PC-9 (cell line): ENCODE measurements at regions of chr7 and their contacts with region 1.

Region 1: GRCh38 chr7:31134246-31135188 is 82.4 kb downstream of the ADCYAP1R1 start:
- DNase-seq: peak; percentile 61 to 64
- H3K4me3 ChIP-seq: no peak overlapping the region
- H3K27ac ChIP-seq: no peak overlapping the region
- H3K4me1 ChIP-seq: no peaks in the 10 kb centered on the region
- H3K27me3 ChIP-seq: peaks cover 44% of the 10 kb centered on the region
- CTCF ChIP-seq: peak; percentile 93

Region 2: GRCh38 chr7:31122649-31123058 is 11.9 kb before region 1 on chr7:
- CTCF ChIA-PET with region 1: interaction called, 12 read pairs
- POLR2A ChIA-PET with region 1: no interaction called
- intact Hi-C with region 1: no loop called
- DNase-seq: peak; percentile 61 to 69
- H3K4me3 ChIP-seq: no peak overlapping the region
- H3K27ac ChIP-seq: no peak overlapping the region
- H3K4me1 ChIP-seq: no peaks in the 10 kb centered on the region
- H3K27me3 ChIP-seq: peaks cover 65% of the 10 kb centered on the region
- CTCF ChIP-seq: peak; percentile 86

Region 3: DNA sequence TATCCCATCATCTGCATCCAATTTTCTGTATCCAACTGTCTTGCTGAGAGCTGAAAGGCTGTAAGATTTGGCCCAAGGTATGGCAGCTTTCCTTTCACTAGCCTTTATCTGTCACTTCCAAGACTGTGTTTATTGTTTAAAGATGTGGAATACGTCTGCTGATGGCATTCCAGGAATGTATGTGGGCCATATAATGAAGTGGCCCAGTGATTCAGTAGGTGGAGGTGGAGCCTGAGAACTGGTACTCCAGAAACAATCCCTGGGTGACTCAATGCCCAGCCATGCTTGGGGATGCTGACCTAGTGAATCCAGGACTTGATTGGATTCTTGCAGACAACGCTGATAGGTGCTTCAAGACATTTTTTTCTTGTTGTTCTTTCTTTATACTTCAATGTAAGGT is 192.6 kb after region 1 on chr7:
- CTCF ChIA-PET with region 1: no interaction called
- POLR2A ChIA-PET with region 1: no interaction called
- intact Hi-C with region 1: no loop called
- DNase-seq: no peak
- H3K4me3 ChIP-seq: no peak overlapping the region
- H3K27ac ChIP-seq: no peak overlapping the region
- H3K4me1 ChIP-seq: no peaks in the 10 kb centered on the region
- H3K27me3 ChIP-seq: peaks cover 17% of the 10 kb centered on the region; the same call in 1 of the 2 replicates
- CTCF ChIP-seq: no peak

Region 4: DNA sequence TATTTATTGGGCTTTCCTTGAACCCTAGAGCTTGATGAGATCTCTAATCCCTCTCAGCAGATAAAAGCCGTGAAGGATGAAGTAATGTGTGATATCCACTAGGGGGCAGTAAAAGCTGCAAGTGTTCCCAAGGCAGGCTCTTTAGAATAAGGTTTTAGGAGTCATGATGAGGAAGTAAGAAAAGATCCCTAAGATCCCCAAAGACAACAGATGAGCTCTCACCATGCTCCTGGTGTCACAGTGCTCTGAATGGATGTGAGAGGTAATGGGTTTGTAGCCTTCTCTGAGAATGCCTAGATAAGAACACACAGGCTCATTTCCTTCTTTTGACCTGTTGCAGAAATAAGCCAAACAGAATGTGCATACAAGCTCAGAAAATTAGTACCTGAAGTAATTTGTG is 308.9 kb after region 1 on chr7:
- CTCF ChIA-PET with region 1: interaction called, 16 read pairs
- POLR2A ChIA-PET with region 1: no interaction called
- intact Hi-C with region 1: no loop called
- DNase-seq: peak; percentile 16 to 66
- H3K4me3 ChIP-seq: no peak overlapping the region
- H3K27ac ChIP-seq: no peak overlapping the region
- H3K4me1 ChIP-seq: no peaks in the 10 kb centered on the region
- H3K27me3 ChIP-seq: 0 out of 2 replicates have a peak, but pooled peaks cover 17% of the 10 kb centered on the region
- CTCF ChIP-seq: peak; percentile 98

Region 5: GRCh38 chr7:31633894-31634494 is 499.5 kb after region 1 on chr7:
- CTCF ChIA-PET with region 1: interaction called, 3 read pairs
- POLR2A ChIA-PET with region 1: no interaction called
- intact Hi-C with region 1: loop called (anchors 1 kb)
- DNase-seq: peak; percentile 50 to 53
- H3K4me3 ChIP-seq: no peak overlapping the region
- H3K27ac ChIP-seq: no peak overlapping the region
- H3K4me1 ChIP-seq: no peaks in the 10 kb centered on the region
- H3K27me3 ChIP-seq: peaks cover 23% of the 10 kb centered on the region
- CTCF ChIP-seq: peak; percentile 74

Region 6: GRCh38 chr7:32204361-32205018 is 1070.0 kb after region 1 on chr7:
- CTCF ChIA-PET with region 1: no interaction called
- POLR2A ChIA-PET with region 1: no interaction called
- intact Hi-C with region 1: loop called (anchors 1 kb)
- DNase-seq: peak; percentile 37 to 58
- H3K4me3 ChIP-seq: no peak overlapping the region
- H3K27ac ChIP-seq: no peak overlapping the region
- H3K4me1 ChIP-seq: no peaks in the 10 kb centered on the region
- H3K27me3 ChIP-seq: peaks cover 11% of the 10 kb centered on the region; the same call in 1 of the 2 replicates
- CTCF ChIP-seq: peak; percentile 77